B cell (primary cell): ENCODE measurements at regions of chr4 and their contacts with region 1.

Region 1: DNA sequence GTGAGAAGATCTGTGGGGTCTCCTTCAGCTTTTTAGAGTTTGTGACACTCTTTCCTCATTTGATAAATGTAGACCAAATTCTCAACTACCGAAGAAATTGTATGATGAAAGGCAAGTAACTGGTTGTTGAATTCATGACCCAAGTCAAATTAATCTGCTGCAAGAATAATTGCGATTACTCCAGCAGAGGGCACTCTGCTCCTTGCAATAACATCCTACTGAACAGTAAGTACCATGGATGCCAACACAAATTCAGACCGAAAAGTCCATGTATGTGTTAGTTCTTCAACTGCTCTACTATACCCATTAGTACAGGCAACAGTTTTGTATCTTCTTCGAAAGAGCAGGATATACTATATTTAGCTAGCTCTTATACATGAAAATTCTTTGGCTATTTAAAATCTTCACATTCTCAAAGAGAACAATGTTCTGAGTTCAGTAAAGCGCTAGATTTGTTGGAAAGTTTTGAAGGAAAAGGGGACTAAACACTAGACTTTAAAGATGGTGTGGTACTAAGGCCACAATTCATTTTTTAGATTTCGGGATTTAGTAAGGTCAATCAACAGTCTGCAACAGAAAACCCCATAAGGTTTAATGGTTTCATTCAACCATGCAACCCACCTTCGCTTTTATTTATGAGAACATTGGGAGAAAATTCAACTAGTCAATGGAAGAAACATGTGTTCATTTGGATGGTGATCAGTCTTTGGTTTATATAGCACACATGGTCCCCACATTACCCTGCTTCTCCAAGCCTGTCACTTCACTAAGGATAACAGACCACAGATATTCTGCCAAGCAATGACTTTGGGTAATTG is 105.4 kb upstream of the TBC1D9 start:
- DNase-seq: peak; percentile 76
- ATAC-seq: peak; percentile 60
- H3K4me3 ChIP-seq: no peak overlapping the region
- H3K4me3 Mint-ChIP-seq: no peak overlapping the region
- H3K27ac ChIP-seq: no peak overlapping the region
- H3K27ac Mint-ChIP-seq: no peak overlapping the region
- H3K4me1 ChIP-seq: peaks cover 3 to 9% of the 10 kb centered on the region in 2 donors
- H3K4me1 Mint-ChIP-seq: peaks cover 15% of the 10 kb centered on the region
- H3K27me3 ChIP-seq: peaks cover 0 to 3% (median 0%) of the 10 kb centered on the region in 4 experiments
- H3K27me3 Mint-ChIP-seq: peaks cover 9% of the 10 kb centered on the region
- CTCF ChIP-seq: peak; percentile 87

Region 2: GRCh38 chr4:140243278-140243753 is 618.3 kb before region 1 on chr4:
- CTCF ChIA-PET with region 1: no interaction called
- POLR2A ChIA-PET with region 1: no interaction called
- intact Hi-C with region 1: no loop called
- DNase-seq: peak; percentile 74
- ATAC-seq: peak; percentile 92
- H3K4me3 ChIP-seq: peak overlapping the region in 4 of 5 experiments; percentile 4 to 51 (median 22)
- H3K4me3 Mint-ChIP-seq: peak overlapping the region; percentile 66
- H3K27ac ChIP-seq: peak overlapping the region; percentile 42 to 61
- H3K27ac Mint-ChIP-seq: peak overlapping the region; percentile 62
- H3K4me1 ChIP-seq: peaks cover 36 to 38% of the 10 kb centered on the region in 2 donors
- H3K4me1 Mint-ChIP-seq: peaks cover 53% of the 10 kb centered on the region
- H3K27me3 ChIP-seq: peaks cover 0 to 4% (median 0%) of the 10 kb centered on the region in 4 experiments
- H3K27me3 Mint-ChIP-seq: peaks cover 4% of the 10 kb centered on the region
- CTCF ChIP-seq: no peak

Region 3: GRCh38 chr4:140884431-140885058 is 23.0 kb after region 1 on chr4:
- CTCF ChIA-PET with region 1: interaction called, 78 read pairs
- POLR2A ChIA-PET with region 1: no interaction called
- intact Hi-C with region 1: loop called (anchors 1 kb)
- DNase-seq: peak; percentile 76
- ATAC-seq: peak; percentile 67
- H3K4me3 ChIP-seq: no peak overlapping the region
- H3K4me3 Mint-ChIP-seq: no peak overlapping the region
- H3K27ac ChIP-seq: no peak overlapping the region
- H3K27ac Mint-ChIP-seq: peak overlapping the region; percentile 38
- H3K4me1 ChIP-seq: no peaks in the 10 kb centered on the region
- H3K4me1 Mint-ChIP-seq: peaks cover 3% of the 10 kb centered on the region
- H3K27me3 ChIP-seq: peaks cover 0 to 17% (median 0%) of the 10 kb centered on the region in 4 experiments
- H3K27me3 Mint-ChIP-seq: peaks cover 29% of the 10 kb centered on the region
- CTCF ChIP-seq: peak; percentile 79

Region 4: GRCh38 chr4:142719854-142720541 is 1858.4 kb after region 1 on chr4:
- CTCF ChIA-PET with region 1: no interaction called
- POLR2A ChIA-PET with region 1: no interaction called
- intact Hi-C with region 1: loop called (anchors 10 kb)
- DNase-seq: no peak
- ATAC-seq: no peak
- H3K4me3 ChIP-seq: no peak overlapping the region
- H3K4me3 Mint-ChIP-seq: no peak overlapping the region
- H3K27ac ChIP-seq: no peak overlapping the region
- H3K27ac Mint-ChIP-seq: no peak overlapping the region
- H3K4me1 ChIP-seq: no peaks in the 10 kb centered on the region
- H3K4me1 Mint-ChIP-seq: no peaks in the 10 kb centered on the region
- H3K27me3 ChIP-seq: no peaks in the 10 kb centered on the region
- H3K27me3 Mint-ChIP-seq: no peaks in the 10 kb centered on the region
- CTCF ChIP-seq: no peak

Region 5: GRCh38 chr4:142846729-142847596 is 1985.4 kb after region 1 on chr4:
- CTCF ChIA-PET with region 1: no interaction called
- POLR2A ChIA-PET with region 1: no interaction called
- intact Hi-C with region 1: loop called (anchors 10 kb)
- DNase-seq: peak; percentile 35
- ATAC-seq: no peak
- H3K4me3 ChIP-seq: peak overlapping the region in 3 of 5 experiments; percentile 41 to 58 (median 43)
- H3K4me3 Mint-ChIP-seq: peak overlapping the region; percentile 78
- H3K27ac ChIP-seq: no peak overlapping the region
- H3K27ac Mint-ChIP-seq: no peak overlapping the region
- H3K4me1 ChIP-seq: peaks cover 24 to 30% of the 10 kb centered on the region in 2 donors
- H3K4me1 Mint-ChIP-seq: peaks cover 25% of the 10 kb centered on the region
- H3K27me3 ChIP-seq: peaks cover 0 to 33% (median 30%) of the 10 kb centered on the region in 4 experiments
- H3K27me3 Mint-ChIP-seq: peaks cover 40% of the 10 kb centered on the region
- CTCF ChIP-seq: no peak